ENCODE measurements at regions of chr15 and their contacts with region 1.

Region 1: DNA sequence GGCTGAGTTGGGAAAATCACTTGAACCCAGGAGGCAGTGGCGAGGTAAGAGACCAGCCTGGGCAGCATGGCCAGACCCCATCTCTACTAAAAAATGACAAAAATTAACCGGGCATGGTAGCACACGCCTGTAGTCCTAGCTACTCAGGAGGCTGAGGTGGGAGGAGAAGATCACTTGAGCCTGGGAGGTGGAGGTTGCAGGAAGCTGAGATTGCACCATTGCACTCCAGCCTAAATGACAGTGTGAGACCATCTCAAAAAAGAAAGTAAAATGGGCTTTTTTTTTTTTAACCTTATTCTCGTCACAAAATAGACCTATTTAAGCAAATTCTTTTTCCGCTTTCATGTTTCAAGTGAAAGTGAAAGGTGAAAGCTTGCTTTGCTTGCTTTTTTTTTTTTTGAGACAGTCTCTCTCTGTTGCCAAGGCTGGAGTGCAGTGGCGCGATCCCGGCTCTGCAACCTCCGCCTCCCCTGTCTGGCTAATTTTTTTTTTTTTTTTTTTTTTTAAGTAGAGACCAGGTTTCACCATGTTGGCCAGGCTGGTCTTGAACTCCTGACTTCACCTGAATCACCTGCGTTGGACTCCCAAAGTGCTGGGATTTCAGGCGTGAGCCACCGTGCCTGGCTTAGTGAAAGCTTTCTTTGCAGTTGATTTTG is 3.6 kb downstream of the PDIA3 start:
- DNase-seq: no peak
- H3K4me3 Mint-ChIP-seq: peak overlapping the region; percentile 26
- H3K27ac Mint-ChIP-seq: no peak overlapping the region
- H3K4me1 Mint-ChIP-seq: peaks cover 18% of the 10 kb centered on the region
- H3K27me3 Mint-ChIP-seq: no peaks in the 10 kb centered on the region
- CTCF ChIP-seq: no peak

Region 2: GRCh38 chr15:43769584-43770228 is 19.9 kb after region 1 on chr15:
- CTCF ChIA-PET with region 1: no interaction called
- intact Hi-C with region 1: loop called (anchors 2 kb)
- DNase-seq: peak; percentile 52
- H3K4me3 Mint-ChIP-seq: no peak overlapping the region
- H3K27ac Mint-ChIP-seq: no peak overlapping the region
- H3K4me1 Mint-ChIP-seq: no peaks in the 10 kb centered on the region
- H3K27me3 Mint-ChIP-seq: no peaks in the 10 kb centered on the region
- CTCF ChIP-seq: no peak